ENCODE measurements at regions of chr5 and their contacts with region 1.

Region 1: DNA sequence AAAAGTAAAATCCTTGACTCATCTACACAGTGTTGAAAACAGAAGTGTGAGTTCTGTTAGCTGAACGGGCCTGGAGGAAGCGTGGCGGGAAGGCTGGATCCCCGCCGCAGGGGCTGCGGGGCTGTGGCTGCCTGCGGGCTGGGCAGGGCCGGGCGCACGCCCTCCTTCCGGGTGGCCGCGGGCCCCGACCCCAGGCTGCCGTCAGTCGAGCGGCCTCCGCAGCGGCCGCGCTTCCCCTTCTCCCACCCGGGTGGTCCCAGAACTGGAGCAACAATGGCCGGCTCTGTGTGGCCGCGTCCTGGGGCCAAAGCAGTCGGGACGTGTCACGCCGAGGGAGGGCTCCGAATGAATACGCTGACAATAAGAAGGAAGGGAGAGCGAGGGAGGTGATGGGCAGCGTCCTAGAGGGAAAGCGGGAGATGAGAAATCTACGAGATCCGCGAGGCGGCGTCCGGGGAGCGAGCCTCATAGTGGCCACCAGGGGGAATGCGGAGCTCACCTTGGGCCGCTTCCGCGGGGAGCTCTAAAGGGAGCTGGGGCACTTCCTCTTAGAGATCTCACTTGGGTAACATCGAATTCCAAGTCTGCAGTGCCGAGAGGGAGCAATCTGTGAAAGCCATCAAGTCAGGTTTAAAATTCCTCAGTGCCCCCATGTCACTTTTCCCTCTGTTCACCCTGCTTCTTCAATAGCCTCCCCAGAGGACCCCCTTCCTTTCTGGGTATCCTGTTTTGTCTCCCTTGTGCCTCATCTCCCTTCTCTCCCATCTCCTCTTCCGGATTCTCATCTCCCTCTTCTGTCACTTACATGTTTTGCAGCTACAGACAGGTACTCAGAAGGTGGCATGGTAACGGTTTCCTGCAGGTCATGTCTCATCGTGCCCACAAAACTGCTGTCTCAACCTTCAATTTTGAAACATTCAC is 83.9 kb downstream of the SLC1A3 start:
- DNase-seq: peak; percentile 38
- H3K4me3 Mint-ChIP-seq: peak overlapping the region; percentile 62
- H3K27ac Mint-ChIP-seq: no peak overlapping the region
- H3K4me1 Mint-ChIP-seq: peaks cover 11% of the 10 kb centered on the region
- H3K27me3 Mint-ChIP-seq: peaks cover 6% of the 10 kb centered on the region

Region 2: GRCh38 chr5:36373527-36374086 is 316.7 kb before region 1 on chr5:
- intact Hi-C with region 1: no loop called
- DNase-seq: no peak
- H3K4me3 Mint-ChIP-seq: no peak overlapping the region
- H3K27ac Mint-ChIP-seq: no peak overlapping the region
- H3K4me1 Mint-ChIP-seq: no peaks in the 10 kb centered on the region
- H3K27me3 Mint-ChIP-seq: peaks cover 1% of the 10 kb centered on the region

Region 3: GRCh38 chr5:36414869-36415282 is 275.4 kb before region 1 on chr5:
- intact Hi-C with region 1: loop called (anchors 1 kb)
- DNase-seq: no peak
- H3K4me3 Mint-ChIP-seq: no peak overlapping the region
- H3K27ac Mint-ChIP-seq: no peak overlapping the region
- H3K4me1 Mint-ChIP-seq: peaks cover 7% of the 10 kb centered on the region
- H3K27me3 Mint-ChIP-seq: peaks cover 4% of the 10 kb centered on the region

Region 4: GRCh38 chr5:36507332-36507952 is 182.9 kb before region 1 on chr5:
- intact Hi-C with region 1: loop called (anchors 1 kb)
- DNase-seq: peak; percentile 47
- H3K4me3 Mint-ChIP-seq: no peak overlapping the region
- H3K27ac Mint-ChIP-seq: no peak overlapping the region
- H3K4me1 Mint-ChIP-seq: no peaks in the 10 kb centered on the region
- H3K27me3 Mint-ChIP-seq: peaks cover 9% of the 10 kb centered on the region

Region 5: GRCh38 chr5:36590513-36591286 is 99.6 kb before region 1 on chr5:
- intact Hi-C with region 1: no loop called
- DNase-seq: no peak
- H3K4me3 Mint-ChIP-seq: no peak overlapping the region
- H3K27ac Mint-ChIP-seq: no peak overlapping the region
- H3K4me1 Mint-ChIP-seq: no peaks in the 10 kb centered on the region
- H3K27me3 Mint-ChIP-seq: peaks cover 9% of the 10 kb centered on the region

Region 6: GRCh38 chr5:36606428-36607113 is 83.7 kb before region 1 on chr5 and contains the start of gene SLC1A3:
- intact Hi-C with region 1: loop called (anchors 10 kb)
- DNase-seq: no peak
- H3K4me3 Mint-ChIP-seq: peak within 1 kb of the TSS; percentile 57
- H3K27ac Mint-ChIP-seq: peak within 1 kb of the TSS; percentile 20
- H3K4me1 Mint-ChIP-seq: peaks cover 15% of the 10 kb centered on the region
- H3K27me3 Mint-ChIP-seq: peaks cover 53% of the 10 kb centered on the region
- total RNA-seq, gene SLC1A3: not detected in 2 replicates

Region 7: DNA sequence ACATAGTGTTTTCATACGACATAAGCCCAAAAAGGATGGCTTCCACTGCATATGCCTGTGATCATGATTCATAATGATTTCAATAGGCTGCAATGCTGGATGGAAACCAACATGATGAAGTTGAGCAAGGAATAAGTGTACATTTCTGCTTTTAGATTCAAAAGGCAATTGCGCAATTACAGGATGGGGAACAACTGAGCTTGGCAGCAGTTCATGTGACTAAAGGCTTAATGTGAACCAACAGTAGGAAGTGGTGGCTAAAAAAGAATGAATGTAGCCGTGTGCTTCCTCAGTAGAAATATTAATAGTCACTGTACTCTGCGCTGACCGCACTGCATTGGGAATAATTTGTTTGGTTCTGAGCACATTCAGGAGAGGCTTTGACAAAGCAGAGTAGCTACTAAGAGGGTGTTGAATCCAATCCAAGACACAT is 32.7 kb before region 1 on chr5:
- intact Hi-C with region 1: no loop called
- DNase-seq: no peak
- H3K4me3 Mint-ChIP-seq: no peak overlapping the region
- H3K27ac Mint-ChIP-seq: no peak overlapping the region
- H3K4me1 Mint-ChIP-seq: no peaks in the 10 kb centered on the region
- H3K27me3 Mint-ChIP-seq: peaks cover 10% of the 10 kb centered on the region

Measured in activated T-helper 1 cell treated with anti-CD3 and anti-CD28 coated beads, Interleukin-12 subunit alpha, Interleukin-12 subunit beta, Interleukin-2, Interleukin-4 antibody, amounts not matched to agents 30 ng/mL and 10 ng/mL and 1 ng/mL, durations not matched to agents 14 hours and 24 hours and 36 hours (primary cell).